Vagina (tissue), 2 donors: ENCODE measurements at regions of chr9 and their contacts with region 1.

Region 1: DNA sequence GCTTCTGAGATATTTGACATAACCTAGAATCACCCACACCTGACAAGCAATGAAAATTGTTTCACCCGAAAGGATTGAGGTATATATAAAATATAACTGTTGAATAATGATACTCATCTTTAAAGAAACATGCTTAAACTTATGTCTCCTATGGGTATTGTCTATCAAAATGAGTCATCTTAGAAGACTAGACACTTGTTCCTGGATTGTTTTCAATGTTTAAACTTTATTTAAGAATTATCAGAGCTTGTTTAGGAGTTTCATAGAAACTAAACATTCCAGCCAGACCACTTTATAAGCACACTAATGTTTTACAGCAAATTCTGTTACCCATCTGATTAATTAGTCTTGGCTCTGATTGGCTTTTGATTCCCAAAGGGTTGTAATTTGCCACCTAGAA is 19.6 kb downstream of the NFX1 start:
- DNase-seq: no peak
- H3K4me3 ChIP-seq: no peak overlapping the region
- H3K27ac ChIP-seq: no peak overlapping the region
- H3K4me1 ChIP-seq: no peaks in the 10 kb centered on the region
- H3K27me3 ChIP-seq: no peaks in the 10 kb centered on the region
- CTCF ChIP-seq: no peak
- POLR2A ChIP-seq: no peak

Region 2: DNA sequence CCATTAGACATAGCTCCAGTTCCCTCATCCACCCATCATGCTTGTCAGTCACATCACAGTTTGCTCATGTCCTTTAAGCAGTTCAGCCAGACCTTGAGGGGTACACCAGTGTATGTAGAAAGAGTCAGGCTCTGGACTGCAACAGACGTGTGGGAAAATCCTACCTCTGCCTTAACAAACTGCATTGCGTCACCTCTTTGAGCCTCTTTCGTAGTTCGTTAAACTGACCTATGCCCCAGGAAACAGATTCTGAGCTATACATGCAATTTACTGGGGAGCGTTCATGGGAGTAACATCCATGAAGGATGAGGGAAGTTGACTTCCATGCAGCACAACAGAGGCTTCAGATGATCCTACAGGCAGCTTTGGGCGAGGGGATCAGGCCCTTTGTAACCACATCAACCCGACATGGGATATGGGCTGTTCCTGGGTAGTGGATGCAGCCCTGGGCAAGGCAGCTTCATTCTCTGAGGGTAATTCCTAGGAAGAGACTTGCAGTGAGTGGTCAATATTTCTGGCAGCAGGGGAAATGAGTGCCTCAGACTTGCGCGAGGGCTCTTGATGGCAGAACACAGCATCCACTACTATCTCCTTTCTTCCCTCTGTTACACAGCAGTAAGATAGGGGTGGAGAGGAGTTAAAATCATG is 65.6 kb before region 1 on chr9:
- intact Hi-C with region 1: loop called (anchors 2 kb)
- DNase-seq: peak in 1 of 2 donors; percentile 32
- H3K4me3 ChIP-seq: no peak overlapping the region
- H3K27ac ChIP-seq: no peak overlapping the region
- H3K4me1 ChIP-seq: no peaks in the 10 kb centered on the region
- H3K27me3 ChIP-seq: no peaks in the 10 kb centered on the region
- CTCF ChIP-seq: no peak
- POLR2A ChIP-seq: no peak